Heart right ventricle (tissue), 16 donors: ENCODE measurements at regions of chr6 and their contacts with region 1.

Region 1: GRCh38 chr6:15615802-15616201 is 47.0 kb downstream of the DTNBP1 start:
- DNase-seq: no peak
- ATAC-seq: peak in 2 of 8 donors; percentile 42 to 58
- H3K4me3 ChIP-seq: no peak overlapping the region
- H3K27ac ChIP-seq: no peak overlapping the region
- H3K4me1 ChIP-seq: peaks cover 0 to 34% (median 11%) of the 10 kb centered on the region in 9 donors
- H3K27me3 ChIP-seq: no peaks in the 10 kb centered on the region
- CTCF ChIP-seq: no peak

Region 2: GRCh38 chr6:15504581-15505350 is 111.0 kb before region 1 on chr6:
- intact Hi-C with region 1: loop called in 4 of 10 experiments (anchors 5 to 10 kb)
- DNase-seq: peak; percentile 73 to 75
- ATAC-seq: peak; percentile 59 to 86 (median 80)
- H3K4me3 ChIP-seq: peak overlapping the region in 8 of 10 donors; percentile 6 to 42 (median 28)
- H3K27ac ChIP-seq: peak overlapping the region; percentile 46 to 88 (median 78)
- H3K4me1 ChIP-seq: peaks cover 15 to 64% (median 51%) of the 10 kb centered on the region in 9 donors
- H3K27me3 ChIP-seq: no peaks in the 10 kb centered on the region
- CTCF ChIP-seq: peak in 1 of 9 donors; percentile 4